Prostate gland (tissue), 2 donors: ENCODE measurements at regions of chr3 and their contacts with region 1.

Region 1: DNA sequence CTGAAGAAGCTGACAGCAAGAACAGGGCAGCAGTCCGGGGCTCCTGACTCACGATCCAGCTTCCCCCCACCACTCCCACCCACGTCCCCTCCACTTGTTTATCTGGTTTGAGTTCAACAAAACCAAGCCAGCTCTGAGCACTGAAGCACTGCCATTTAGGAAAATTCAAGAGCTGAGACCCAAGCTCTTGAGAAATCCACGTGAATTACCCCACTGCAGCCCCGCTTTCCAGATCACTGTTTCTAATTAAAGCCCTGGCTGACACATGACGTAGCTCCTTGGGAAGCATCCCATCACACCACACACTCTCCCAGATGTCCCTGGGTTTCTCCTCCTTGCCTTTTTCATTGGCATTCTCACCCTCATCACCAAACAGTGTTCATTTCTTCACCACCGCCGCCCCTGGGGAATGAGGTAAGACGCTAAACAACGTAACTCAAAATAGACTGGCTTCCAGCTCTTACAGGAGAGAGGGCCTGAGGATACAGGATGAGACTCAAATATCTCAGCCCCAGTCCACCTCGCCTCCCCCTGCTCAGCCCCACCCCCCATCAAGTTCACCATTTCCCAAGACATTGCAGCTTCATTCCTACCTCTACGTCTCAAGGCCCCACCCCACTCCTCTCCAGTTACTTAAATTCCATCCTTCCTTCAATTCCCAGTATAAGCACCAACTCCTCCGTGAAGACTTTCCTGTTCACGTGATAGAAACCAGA is 95.4 kb downstream of the SRGAP3 start:
- DNase-seq: no peak
- H3K4me3 ChIP-seq: no peak overlapping the region
- H3K27ac ChIP-seq: no peak overlapping the region
- H3K4me1 ChIP-seq: no peaks in the 10 kb centered on the region
- H3K27me3 ChIP-seq: no peaks in the 10 kb centered on the region
- CTCF ChIP-seq: no peak
- POLR2A ChIP-seq: no peak

Region 2: DNA sequence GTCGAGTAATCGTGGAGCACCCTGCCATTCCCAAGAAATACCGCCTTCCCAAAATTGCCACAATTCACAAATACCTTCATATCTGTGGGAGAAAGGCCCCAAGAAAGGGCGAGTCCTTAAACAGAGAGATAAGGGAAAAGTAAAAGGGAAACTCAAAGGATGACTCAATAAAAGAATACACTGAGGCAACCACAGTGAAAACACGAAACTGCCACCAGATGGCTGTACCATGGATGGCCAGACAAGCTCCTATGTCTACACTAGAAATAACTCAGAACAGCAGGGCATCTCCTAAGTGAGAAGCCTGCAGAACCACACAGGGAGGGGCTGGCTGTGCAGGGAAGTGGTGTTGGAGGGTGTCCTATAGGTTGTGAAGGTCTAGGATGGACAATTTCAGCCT is 70.4 kb after region 1 on chr3:
- intact Hi-C with region 1: loop called (anchors 10 kb)
- DNase-seq: no peak
- H3K4me3 ChIP-seq: no peak overlapping the region
- H3K27ac ChIP-seq: no peak overlapping the region
- H3K4me1 ChIP-seq: no peaks in the 10 kb centered on the region
- H3K27me3 ChIP-seq: no peaks in the 10 kb centered on the region
- CTCF ChIP-seq: no peak
- POLR2A ChIP-seq: no peak

Region 3: DNA sequence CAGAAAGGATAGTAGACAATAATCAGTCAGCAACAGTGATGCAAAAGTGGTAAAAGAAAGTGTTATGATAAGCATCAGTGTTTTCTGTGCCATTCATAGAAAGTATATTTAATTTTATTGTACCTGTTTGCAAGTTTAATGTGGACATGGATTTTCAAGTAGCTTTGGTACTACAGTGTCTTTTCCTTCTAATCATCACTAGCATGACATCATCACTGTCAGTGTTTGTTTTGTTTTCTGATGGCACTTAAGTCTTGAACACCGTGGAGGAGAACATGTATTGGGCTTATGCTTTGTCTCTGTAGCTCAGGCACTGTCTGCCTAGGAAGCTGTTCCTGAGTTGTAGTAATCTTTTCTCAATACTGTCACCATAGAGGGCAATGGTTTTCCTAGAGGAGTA is 285.3 kb after region 1 on chr3:
- intact Hi-C with region 1: no loop called
- DNase-seq: no peak
- H3K4me3 ChIP-seq: no peak overlapping the region
- H3K27ac ChIP-seq: no peak overlapping the region
- H3K4me1 ChIP-seq: no peaks in the 10 kb centered on the region
- H3K27me3 ChIP-seq: no peaks in the 10 kb centered on the region
- CTCF ChIP-seq: no peak
- POLR2A ChIP-seq: no peak

Region 4: GRCh38 chr3:10377148-10377725 is 1223.2 kb after region 1 on chr3:
- intact Hi-C with region 1: no loop called
- DNase-seq: no peak
- H3K4me3 ChIP-seq: no peak overlapping the region
- H3K27ac ChIP-seq: no peak overlapping the region
- H3K4me1 ChIP-seq: no peaks in the 10 kb centered on the region
- H3K27me3 ChIP-seq: no peaks in the 10 kb centered on the region
- CTCF ChIP-seq: no peak
- POLR2A ChIP-seq: no peak